A549 (cell line): ENCODE measurements at regions of chr17 and their contacts with region 1.

Region 1: DNA sequence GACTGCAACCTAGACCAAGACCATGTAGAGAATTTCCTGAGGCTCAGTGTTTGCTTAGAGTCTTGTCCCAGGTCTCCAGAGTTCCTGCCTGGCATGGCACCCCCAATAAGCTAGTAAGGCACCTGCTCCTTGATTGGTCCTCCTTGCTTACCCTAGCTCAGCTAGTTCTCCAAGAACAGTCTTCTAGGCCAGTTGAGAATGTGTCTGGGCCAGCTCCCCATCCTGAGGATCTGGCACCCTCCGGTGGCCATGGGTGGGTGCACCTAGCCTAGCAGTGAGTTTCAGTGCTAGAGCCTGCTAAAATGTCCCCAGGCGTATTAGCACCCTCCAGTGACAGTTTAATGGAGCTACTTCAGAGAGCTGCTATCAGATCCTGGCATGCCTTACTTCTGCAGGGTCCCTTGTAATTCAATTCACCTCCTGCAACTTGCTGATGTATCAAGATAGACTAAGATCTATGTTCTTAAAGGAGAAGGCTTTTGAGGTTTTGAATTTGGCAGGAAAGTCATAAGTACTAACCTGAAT is 44.4 kb upstream of the MED13 start:
- DNase-seq: peak; percentile 92
- ATAC-seq: peak; percentile 96 to 99
- H3K4me3 ChIP-seq: no peak overlapping the region
- H3K27ac ChIP-seq: 0 out of 6 replicates have a peak overlapping the region, but pooled peaks of 1 of the 2 experiments have one; percentile 6
- H3K4me1 ChIP-seq: peaks cover 26% of the 10 kb centered on the region
- CTCF ChIP-seq: peak; percentile 99
- EP300 ChIP-seq: no peak
- POLR2A ChIP-seq: no peak
- RAD21 ChIP-seq: peak; percentile 99 to 100

Region 2: GRCh38 chr17:61966191-61966590 is 143.2 kb before region 1 on chr17:
- CTCF ChIA-PET with region 1: interaction called, 10 read pairs
- POLR2A ChIA-PET with region 1: no interaction called
- DNase-seq: no peak
- ATAC-seq: no peak
- H3K4me3 ChIP-seq: no peak overlapping the region
- H3K27ac ChIP-seq: no peak overlapping the region
- H3K4me1 ChIP-seq: no peaks in the 10 kb centered on the region
- CTCF ChIP-seq: no peak
- EP300 ChIP-seq: no peak
- POLR2A ChIP-seq: no peak
- RAD21 ChIP-seq: no peak

Region 3: DNA sequence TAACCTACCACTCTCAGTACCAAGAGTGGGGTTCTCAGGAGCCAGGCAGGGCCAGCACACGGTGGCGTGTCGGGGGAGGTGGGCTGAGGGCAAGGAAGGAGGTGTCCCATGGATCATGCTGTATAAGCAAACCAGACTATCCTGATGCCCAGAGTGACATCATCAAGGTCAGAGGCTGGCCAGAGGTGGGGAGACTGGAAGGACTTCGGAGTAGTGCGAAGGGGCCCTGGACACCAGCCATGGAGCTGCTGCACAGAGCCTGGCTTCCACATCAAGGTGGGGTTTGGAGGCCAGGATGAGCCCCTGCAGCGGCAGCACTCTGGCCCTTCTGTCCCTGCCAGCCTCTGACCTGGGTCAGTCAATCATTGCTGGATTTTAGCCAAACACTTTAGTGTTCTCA is 79.2 kb before region 1 on chr17:
- CTCF ChIA-PET with region 1: interaction called, 16 read pairs
- POLR2A ChIA-PET with region 1: no interaction called
- DNase-seq: no peak
- ATAC-seq: no peak; a peak in 1 of 6 replicates
- H3K4me3 ChIP-seq: no peak overlapping the region
- H3K27ac ChIP-seq: no peak overlapping the region
- H3K4me1 ChIP-seq: no peaks in the 10 kb centered on the region
- CTCF ChIP-seq: no peak
- EP300 ChIP-seq: no peak
- POLR2A ChIP-seq: no peak
- RAD21 ChIP-seq: no peak

Region 4: DNA sequence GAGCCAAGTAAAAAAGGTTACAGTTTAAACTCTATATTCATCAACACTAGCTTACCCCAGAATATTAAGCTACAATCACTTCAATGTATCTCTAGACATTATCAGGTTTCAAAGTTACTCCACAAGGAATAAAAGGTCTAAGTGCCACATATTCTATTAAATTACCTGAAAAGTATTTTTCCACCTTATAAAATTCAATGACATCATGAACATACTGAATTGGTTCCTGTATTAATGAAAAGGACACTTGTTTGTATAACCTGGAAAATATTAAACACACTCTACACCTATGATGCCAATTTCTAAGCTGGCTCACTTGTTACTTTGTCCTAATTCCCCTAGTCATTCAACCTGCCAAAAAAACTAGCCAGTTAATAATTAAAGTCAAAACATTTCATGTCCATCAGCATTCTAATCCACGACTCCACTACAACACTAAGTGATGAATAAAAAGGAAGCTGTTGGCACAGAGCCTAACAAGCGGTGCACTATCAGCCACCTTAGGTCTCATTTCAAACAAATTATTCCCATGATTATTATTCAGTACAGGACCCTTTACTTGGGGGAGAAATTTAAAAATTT is 56.6 kb before region 1 on chr17:
- CTCF ChIA-PET with region 1: interaction called, 35 read pairs
- POLR2A ChIA-PET with region 1: no interaction called
- DNase-seq: no peak
- ATAC-seq: no peak
- H3K4me3 ChIP-seq: no peak overlapping the region
- H3K27ac ChIP-seq: no peak overlapping the region
- H3K4me1 ChIP-seq: peaks cover 58% of the 10 kb centered on the region
- CTCF ChIP-seq: no peak
- EP300 ChIP-seq: no peak
- POLR2A ChIP-seq: no peak
- RAD21 ChIP-seq: no peak

Region 5: DNA sequence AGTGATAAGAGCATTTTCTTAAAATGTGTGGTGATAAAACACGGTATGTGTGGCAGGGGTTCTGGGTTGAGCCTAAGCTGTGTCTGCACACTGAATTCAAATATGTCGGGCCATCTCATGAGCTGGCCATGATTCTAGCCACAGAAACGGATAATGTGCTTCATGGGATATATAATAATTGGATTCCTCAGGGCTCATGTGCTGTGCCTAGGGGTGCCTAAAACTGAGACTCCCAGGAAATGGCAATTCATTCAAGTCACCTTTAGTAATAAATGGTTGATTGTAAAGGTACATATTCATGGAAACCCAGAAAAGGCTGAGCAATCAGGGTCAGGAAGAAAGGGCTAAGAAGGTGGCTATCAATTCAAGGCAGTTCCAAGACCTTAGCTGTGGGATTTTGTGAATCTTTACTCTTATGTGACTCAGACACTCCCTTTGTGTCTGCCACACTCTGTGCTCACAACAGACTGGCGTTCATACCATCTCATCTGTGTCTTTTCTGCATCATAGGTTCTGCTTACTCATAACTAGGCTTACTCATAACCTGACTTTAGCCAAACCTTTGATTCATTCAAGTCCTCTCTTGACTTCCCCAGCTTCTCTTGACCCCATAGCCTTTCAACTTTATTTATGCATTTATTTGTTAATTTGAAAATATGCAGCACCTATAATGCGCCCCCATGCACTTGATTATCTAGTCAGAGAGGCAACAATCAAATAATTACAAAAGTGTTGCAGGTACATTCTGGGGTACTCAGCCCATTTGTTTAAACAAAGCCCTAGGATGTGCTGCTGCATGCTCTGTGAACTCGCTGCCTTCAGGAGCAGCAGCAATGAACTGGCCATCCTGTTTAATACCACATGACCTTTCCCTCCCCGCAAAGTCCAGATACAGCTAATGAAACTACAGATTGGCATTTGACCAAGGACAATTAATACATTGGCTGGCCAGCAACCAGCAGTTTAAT is 16.0 kb before region 1 on chr17:
- CTCF ChIA-PET with region 1: interaction called, 145 read pairs
- POLR2A ChIA-PET with region 1: no interaction called
- DNase-seq: peak; percentile 88 to 91
- ATAC-seq: peak; percentile 99
- H3K4me3 ChIP-seq: no peak overlapping the region
- H3K27ac ChIP-seq: peak overlapping the region; percentile 67 to 84
- H3K4me1 ChIP-seq: peaks cover 24% of the 10 kb centered on the region
- CTCF ChIP-seq: no peak
- EP300 ChIP-seq: no peak
- POLR2A ChIP-seq: no peak
- RAD21 ChIP-seq: no peak

Region 6: DNA sequence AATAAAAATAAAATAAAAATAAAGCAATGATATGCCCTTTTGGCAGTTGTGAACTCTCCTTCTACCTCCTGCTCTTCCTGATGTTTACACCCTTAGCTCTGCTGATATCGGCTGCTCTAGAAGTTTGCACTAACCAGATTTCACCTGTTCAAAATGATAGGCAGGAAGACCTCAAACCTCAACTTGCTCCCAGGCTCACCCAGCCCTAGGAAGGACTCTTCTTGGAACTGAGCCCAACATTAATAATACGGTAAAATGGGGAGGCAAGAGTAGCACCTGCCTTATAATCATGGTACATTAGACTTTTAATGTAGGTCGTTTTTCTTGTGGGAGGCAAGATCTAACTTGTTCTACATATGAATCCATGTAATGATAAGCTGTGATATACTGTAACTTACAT is 16.9 kb after region 1 on chr17:
- CTCF ChIA-PET with region 1: interaction called, 23 read pairs
- POLR2A ChIA-PET with region 1: no interaction called
- DNase-seq: no peak
- ATAC-seq: peak in 1 of 2 experiments; percentile 19; a peak in 1 of 6 replicates
- H3K4me3 ChIP-seq: no peak overlapping the region
- H3K27ac ChIP-seq: no peak overlapping the region
- H3K4me1 ChIP-seq: 0 out of 3 replicates have a peak, but pooled peaks cover 4% of the 10 kb centered on the region
- CTCF ChIP-seq: no peak
- EP300 ChIP-seq: no peak
- POLR2A ChIP-seq: no peak
- RAD21 ChIP-seq: no peak

Region 7: GRCh38 chr17:62179534-62180151 is 70.2 kb after region 1 on chr17:
- CTCF ChIA-PET with region 1: interaction called, 12 read pairs
- POLR2A ChIA-PET with region 1: no interaction called
- DNase-seq: peak; percentile 85 to 92
- ATAC-seq: peak; percentile 97 to 99
- H3K4me3 ChIP-seq: no peak overlapping the region
- H3K27ac ChIP-seq: peak overlapping the region; percentile 68 to 84
- H3K4me1 ChIP-seq: peaks cover 19% of the 10 kb centered on the region
- CTCF ChIP-seq: peak; percentile 60
- EP300 ChIP-seq: no peak
- POLR2A ChIP-seq: no peak
- RAD21 ChIP-seq: peak; percentile 79 to 81